ENCODE measurements at regions of chr1 and their contacts with region 1.

Region 1: GRCh38 chr1:116724765-116725375 is 29.4 kb upstream of the CD2 start:
- DNase-seq: peak; percentile 89
- ATAC-seq: peak; percentile 83
- H3K4me3 Mint-ChIP-seq: no peak overlapping the region
- H3K27ac Mint-ChIP-seq: no peak overlapping the region
- H3K4me1 Mint-ChIP-seq: peaks cover 33% of the 10 kb centered on the region
- H3K27me3 Mint-ChIP-seq: no peaks in the 10 kb centered on the region

Region 2: GRCh38 chr1:116574581-116575291 is 150.1 kb before region 1 on chr1:
- CTCF ChIA-PET with region 1: interaction called, 19 read pairs
- POLR2A ChIA-PET with region 1: no interaction called
- DNase-seq: peak; percentile 75
- ATAC-seq: no peak
- H3K4me3 Mint-ChIP-seq: no peak overlapping the region
- H3K27ac Mint-ChIP-seq: no peak overlapping the region
- H3K4me1 Mint-ChIP-seq: peaks cover 31% of the 10 kb centered on the region
- H3K27me3 Mint-ChIP-seq: peaks cover 5% of the 10 kb centered on the region

Region 3: GRCh38 chr1:116763787-116764465 is 39.1 kb after region 1 on chr1:
- CTCF ChIA-PET with region 1: interaction called, 12 read pairs
- POLR2A ChIA-PET with region 1: interaction called, 15 read pairs
- DNase-seq: peak; percentile 74
- ATAC-seq: peak; percentile 21
- H3K4me3 Mint-ChIP-seq: peak overlapping the region; percentile 79
- H3K27ac Mint-ChIP-seq: peak overlapping the region; percentile 99
- H3K4me1 Mint-ChIP-seq: peaks cover 97% of the 10 kb centered on the region
- H3K27me3 Mint-ChIP-seq: no peaks in the 10 kb centered on the region

Region 4: DNA sequence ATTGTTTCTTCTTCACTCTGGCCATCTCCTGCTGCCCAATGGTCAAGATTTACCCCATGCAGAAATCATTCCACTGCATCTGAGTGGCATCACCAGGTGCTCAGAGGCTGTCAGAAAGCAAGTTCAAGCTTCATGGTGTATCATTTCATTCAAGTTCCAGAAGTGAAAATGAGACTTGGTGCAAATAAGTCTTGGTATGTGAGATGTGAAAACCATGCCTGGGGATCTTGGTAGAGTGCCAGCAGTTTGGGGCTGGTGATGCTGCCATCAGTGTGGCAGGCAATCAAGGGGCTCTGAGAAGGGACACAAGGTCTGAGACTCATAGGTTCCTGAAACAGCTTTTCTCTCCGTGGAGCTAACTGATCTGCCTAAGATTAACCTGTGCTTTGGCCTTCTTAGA is 81.4 kb after region 1 on chr1:
- CTCF ChIA-PET with region 1: no interaction called
- POLR2A ChIA-PET with region 1: no interaction called
- DNase-seq: peak; percentile 56
- ATAC-seq: peak; percentile 35
- H3K4me3 Mint-ChIP-seq: peak overlapping the region; percentile 58
- H3K27ac Mint-ChIP-seq: peak overlapping the region; percentile 92
- H3K4me1 Mint-ChIP-seq: peaks cover 91% of the 10 kb centered on the region
- H3K27me3 Mint-ChIP-seq: no peaks in the 10 kb centered on the region

Region 5: DNA sequence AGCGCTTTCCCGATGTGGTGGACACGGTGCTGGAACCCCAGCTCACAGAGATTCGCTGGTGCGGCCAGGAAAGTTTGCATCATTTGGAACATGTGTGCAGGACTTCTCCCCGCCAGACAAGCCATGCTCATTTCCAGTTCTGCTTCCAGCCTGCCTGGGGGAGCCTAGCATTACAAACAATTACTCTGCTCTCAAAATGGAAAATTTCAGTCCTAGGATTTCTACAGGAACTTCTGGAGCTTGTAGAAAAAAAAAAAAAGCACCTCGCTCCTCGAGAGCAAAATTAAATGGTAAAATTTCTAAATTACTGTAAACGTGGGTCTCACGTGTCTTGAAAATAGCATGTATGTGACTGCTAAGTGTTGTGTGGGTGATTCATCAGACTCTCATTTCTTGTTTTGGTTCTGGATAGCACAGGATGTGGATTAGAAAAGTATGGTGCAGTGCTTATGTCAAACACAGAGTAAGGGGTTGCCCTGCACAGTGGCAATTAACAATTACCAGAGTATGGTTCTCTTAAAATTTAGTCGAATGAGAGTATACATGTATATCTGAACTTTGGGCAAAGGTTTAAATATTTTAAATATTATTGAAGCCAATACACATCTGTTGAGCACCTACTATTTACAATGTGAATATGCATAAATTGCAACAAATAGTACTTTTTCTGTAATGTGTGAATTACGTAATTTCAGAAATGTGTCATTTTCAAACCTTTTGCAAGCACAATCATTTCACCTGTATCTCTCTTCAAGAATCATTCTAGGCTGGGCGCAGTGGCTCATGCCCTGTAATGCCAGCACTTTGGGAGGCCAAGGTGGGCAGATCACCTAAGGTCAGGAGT is 123.0 kb after region 1 on chr1:
- CTCF ChIA-PET with region 1: interaction called, 11 read pairs
- POLR2A ChIA-PET with region 1: no interaction called
- DNase-seq: no peak
- ATAC-seq: peak; percentile 57
- H3K4me3 Mint-ChIP-seq: no peak overlapping the region
- H3K27ac Mint-ChIP-seq: no peak overlapping the region
- H3K4me1 Mint-ChIP-seq: peaks cover 12% of the 10 kb centered on the region
- H3K27me3 Mint-ChIP-seq: no peaks in the 10 kb centered on the region

Region 6: GRCh38 chr1:116909510-116910378 is 184.9 kb after region 1 on chr1 and contains the start of gene PTGFRN:
- CTCF ChIA-PET with region 1: no interaction called
- POLR2A ChIA-PET with region 1: no interaction called
- DNase-seq: no peak
- ATAC-seq: peak; percentile 68
- H3K4me3 Mint-ChIP-seq: peak within 1 kb of the TSS; percentile 68
- H3K27ac Mint-ChIP-seq: no peak within 1 kb of the TSS
- H3K4me1 Mint-ChIP-seq: peaks cover 4% of the 10 kb centered on the region
- H3K27me3 Mint-ChIP-seq: peaks cover 9% of the 10 kb centered on the region
- total RNA-seq, gene PTGFRN: 0.89 to 0.90 TPM

Region 7: GRCh38 chr1:117128323-117129079 is 403.6 kb after region 1 on chr1:
- CTCF ChIA-PET with region 1: interaction called, 11 read pairs
- POLR2A ChIA-PET with region 1: no interaction called
- DNase-seq: no peak
- ATAC-seq: no peak
- H3K4me3 Mint-ChIP-seq: no peak overlapping the region
- H3K27ac Mint-ChIP-seq: no peak overlapping the region
- H3K4me1 Mint-ChIP-seq: no peaks in the 10 kb centered on the region
- H3K27me3 Mint-ChIP-seq: peaks cover 19% of the 10 kb centered on the region

Measured in activated CD8-positive, alpha-beta T cell treated with anti-CD3 and anti-CD28 coated beads, Interleukin-2, amount 10 ng/mL, durations not matched to agents 7 days and 5 days (primary cell).